ENCODE measurements at regions of chr17 and their contacts with region 1.

Region 1: GRCh38 chr17:58352014-58352842 is at the start of gene SUPT4H1:
- DNase-seq: peak; percentile 91 to 94 (median 94)
- H3K4me3 ChIP-seq: peak within 1 kb of the TSS; percentile 92 to 98
- H3K4me3 Mint-ChIP-seq: peak within 1 kb of the TSS; percentile 99 to 100 (median 99)
- H3K27ac ChIP-seq: peak within 1 kb of the TSS; percentile 85
- H3K27ac Mint-ChIP-seq: peak within 1 kb of the TSS; percentile 98 to 100 (median 99)
- H3K4me1 ChIP-seq: peaks cover 57% of the 10 kb centered on the region
- H3K4me1 Mint-ChIP-seq: peaks cover 37 to 65% (median 52%) of the 10 kb centered on the region in 4 donors
- H3K27me3 ChIP-seq: no peaks in the 10 kb centered on the region
- H3K27me3 Mint-ChIP-seq: no peaks in the 10 kb centered on the region
- total RNA-seq, gene SUPT4H1: 61.4 to 75.2 TPM

Region 2: GRCh38 chr17:58219001-58219788 is 133.0 kb before region 1 on chr17 and contains the start of gene MKS1:
- CTCF ChIA-PET with region 1: no interaction called
- POLR2A ChIA-PET with region 1: interaction called, 11 read pairs
- intact Hi-C with region 1: no loop called
- DNase-seq: peak; percentile 94 to 96 (median 95)
- H3K4me3 ChIP-seq: peak within 1 kb of the TSS; percentile 71 to 88
- H3K4me3 Mint-ChIP-seq: peak within 1 kb of the TSS; percentile 91 to 99 (median 94)
- H3K27ac ChIP-seq: peak within 1 kb of the TSS; percentile 54
- H3K27ac Mint-ChIP-seq: peak within 1 kb of the TSS; percentile 94 to 99 (median 97)
- H3K4me1 ChIP-seq: peaks cover 15% of the 10 kb centered on the region
- H3K4me1 Mint-ChIP-seq: peaks cover 19 to 28% (median 23%) of the 10 kb centered on the region in 4 donors
- H3K27me3 ChIP-seq: no peaks in the 10 kb centered on the region
- H3K27me3 Mint-ChIP-seq: peaks cover 0 to 2% of the 10 kb centered on the region in 2 donors
- total RNA-seq, gene MKS1: 27.7 to 29.4 TPM

Region 3: DNA sequence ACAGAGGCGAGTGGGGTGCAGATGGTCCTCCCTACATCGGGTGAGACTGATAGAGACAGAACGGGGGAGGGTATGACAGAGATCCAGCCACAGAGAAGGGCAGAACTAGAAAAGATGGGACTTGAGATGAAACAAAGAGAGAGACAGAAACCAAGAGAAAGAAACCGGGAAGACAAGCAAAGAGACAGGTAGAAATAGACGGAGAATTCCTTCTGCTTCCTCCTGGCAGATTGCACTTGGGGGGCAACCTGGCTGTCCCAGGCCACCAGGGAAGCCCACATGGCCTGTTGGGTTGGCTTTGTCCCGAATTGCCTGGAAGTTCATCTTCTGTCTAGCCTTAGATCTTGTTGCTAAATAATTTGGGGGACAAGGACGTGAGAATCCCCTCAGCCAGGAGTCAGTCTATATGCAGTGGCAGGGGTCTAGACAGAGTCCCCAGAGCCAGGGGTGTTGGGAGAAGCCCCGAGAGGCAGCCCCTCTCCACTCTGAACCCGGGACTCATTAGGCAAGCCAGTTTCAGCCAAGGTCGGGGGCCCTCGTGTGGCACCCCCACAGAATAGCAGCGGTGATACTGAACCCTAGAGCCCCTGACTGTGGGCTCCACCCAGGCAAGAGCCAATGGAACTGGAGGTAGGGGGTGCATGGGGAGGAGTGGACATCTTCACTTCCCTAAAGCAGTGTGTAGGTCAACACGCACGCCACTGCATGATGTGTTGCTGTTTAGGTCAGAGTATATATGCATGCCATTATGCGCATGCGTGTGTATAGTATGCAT is 23.0 kb before region 1 on chr17:
- CTCF ChIA-PET with region 1: interaction called, 510 read pairs
- POLR2A ChIA-PET with region 1: interaction called, 3,924 read pairs
- intact Hi-C with region 1: loop called (anchors 2 kb)
- DNase-seq: peak; percentile 67 to 79 (median 73)
- H3K4me3 ChIP-seq: peak overlapping the region; percentile 82 to 99
- H3K4me3 Mint-ChIP-seq: peak overlapping the region; percentile 88 to 99 (median 98)
- H3K27ac ChIP-seq: peak overlapping the region; percentile 97
- H3K27ac Mint-ChIP-seq: peak overlapping the region; percentile 93 to 99 (median 97)
- H3K4me1 ChIP-seq: peaks cover 47% of the 10 kb centered on the region
- H3K4me1 Mint-ChIP-seq: peaks cover 25 to 72% (median 36%) of the 10 kb centered on the region in 4 donors
- H3K27me3 ChIP-seq: no peaks in the 10 kb centered on the region
- H3K27me3 Mint-ChIP-seq: no peaks in the 10 kb centered on the region

Region 4: GRCh38 chr17:58364270-58364942 is 12.2 kb after region 1 on chr17:
- CTCF ChIA-PET with region 1: no interaction called
- POLR2A ChIA-PET with region 1: interaction called, 24 read pairs
- intact Hi-C with region 1: no loop called
- DNase-seq: no peak
- H3K4me3 ChIP-seq: no peak overlapping the region
- H3K4me3 Mint-ChIP-seq: no peak overlapping the region
- H3K27ac ChIP-seq: no peak overlapping the region
- H3K27ac Mint-ChIP-seq: no peak overlapping the region
- H3K4me1 ChIP-seq: no peaks in the 10 kb centered on the region
- H3K4me1 Mint-ChIP-seq: peaks cover 0 to 1% (median 0%) of the 10 kb centered on the region in 4 donors
- H3K27me3 ChIP-seq: no peaks in the 10 kb centered on the region
- H3K27me3 Mint-ChIP-seq: peaks cover 0 to 1% of the 10 kb centered on the region in 2 donors

Region 5: DNA sequence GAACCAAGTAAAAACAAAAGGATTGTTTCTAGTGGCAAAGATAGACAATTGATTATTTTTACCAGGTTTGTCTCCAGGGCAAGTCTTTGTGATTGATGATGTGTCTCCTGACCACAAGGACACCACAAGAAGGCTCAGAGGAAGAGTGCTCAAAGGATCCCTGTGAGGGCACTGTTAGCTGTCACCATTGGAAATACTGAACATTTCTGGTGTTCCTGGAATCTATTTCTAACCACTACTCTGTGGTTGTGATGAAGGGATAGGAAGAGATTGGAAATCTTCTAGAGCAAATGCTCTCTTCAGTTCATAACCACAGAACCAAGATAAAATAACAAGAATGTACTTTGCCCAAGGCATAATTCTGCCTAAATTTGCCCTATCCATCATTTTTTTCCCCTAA is 49.8 kb after region 1 on chr17:
- CTCF ChIA-PET with region 1: no interaction called
- POLR2A ChIA-PET with region 1: no interaction called
- intact Hi-C with region 1: no loop called
- DNase-seq: no peak
- H3K4me3 ChIP-seq: no peak overlapping the region
- H3K4me3 Mint-ChIP-seq: no peak overlapping the region
- H3K27ac ChIP-seq: no peak overlapping the region
- H3K27ac Mint-ChIP-seq: no peak overlapping the region
- H3K4me1 ChIP-seq: no peaks in the 10 kb centered on the region
- H3K4me1 Mint-ChIP-seq: peaks cover 5 to 6% (median 5%) of the 10 kb centered on the region in 4 donors
- H3K27me3 ChIP-seq: no peaks in the 10 kb centered on the region
- H3K27me3 Mint-ChIP-seq: no peaks in the 10 kb centered on the region

Region 6: DNA sequence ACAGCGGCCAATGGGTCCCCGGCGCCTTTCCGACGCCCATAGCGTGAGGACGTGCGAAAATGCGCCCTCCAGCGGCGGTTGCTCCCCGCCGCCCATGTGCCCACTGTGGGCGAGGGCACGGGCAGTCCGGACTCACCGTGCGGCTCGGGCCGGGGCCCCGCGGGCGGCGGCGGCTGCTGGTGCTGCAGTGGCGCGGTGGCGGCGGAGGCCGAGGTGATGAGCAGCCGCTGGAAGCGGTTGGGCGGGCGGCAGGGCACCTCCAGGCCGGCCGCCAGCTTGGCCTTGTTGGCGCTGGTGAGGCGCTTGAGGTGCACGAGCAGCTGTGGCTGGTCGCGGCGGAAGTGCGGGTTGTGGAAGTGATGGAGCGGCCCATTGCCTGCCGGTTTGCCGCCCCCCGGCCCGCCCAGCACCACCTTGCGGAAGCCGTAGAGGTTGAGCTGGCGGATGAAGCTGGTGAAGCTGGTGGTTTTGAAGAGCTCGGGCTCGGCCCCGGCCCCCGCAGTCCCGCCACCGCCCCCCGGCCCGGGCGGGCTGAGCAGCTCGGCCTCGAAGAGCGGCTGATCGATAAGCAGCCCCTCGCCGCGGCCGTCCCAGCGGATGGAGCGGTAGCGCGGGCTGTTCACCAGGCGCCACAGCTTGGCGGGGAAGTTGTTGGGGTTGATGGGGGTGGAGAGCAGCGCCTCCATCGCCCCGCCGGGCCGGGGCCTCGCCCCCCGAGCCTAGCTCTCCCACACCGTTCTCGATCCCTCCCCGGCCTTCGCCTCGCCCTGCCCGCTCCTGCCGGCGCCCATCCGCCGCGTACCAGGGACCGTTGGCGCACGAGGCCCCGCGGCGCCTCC is 135.6 kb after region 1 on chr17 and contains the start of gene HSF5:
- CTCF ChIA-PET with region 1: interaction called, 9 read pairs
- POLR2A ChIA-PET with region 1: interaction called, 12 read pairs
- intact Hi-C with region 1: no loop called
- DNase-seq: peak; percentile 76 to 83 (median 82)
- H3K4me3 ChIP-seq: peak within 1 kb of the TSS; percentile 46 to 47
- H3K4me3 Mint-ChIP-seq: peak within 1 kb of the TSS; percentile 50 to 81 (median 70)
- H3K27ac ChIP-seq: peak within 1 kb of the TSS; percentile 20
- H3K27ac Mint-ChIP-seq: peak within 1 kb of the TSS in 5 of 7 donors; percentile 15 to 72 (median 47)
- H3K4me1 ChIP-seq: peaks cover 4% of the 10 kb centered on the region
- H3K4me1 Mint-ChIP-seq: peaks cover 5 to 15% (median 5%) of the 10 kb centered on the region in 4 donors
- H3K27me3 ChIP-seq: no peaks in the 10 kb centered on the region
- H3K27me3 Mint-ChIP-seq: no peaks in the 10 kb centered on the region
- total RNA-seq, gene HSF5: 2.1 to 2.4 TPM

Measured in CD4-positive, alpha-beta memory T cell (primary cell).